PC-9 (cell line): ENCODE measurements at regions of chr16 and their contacts with region 1.

Region 1: DNA sequence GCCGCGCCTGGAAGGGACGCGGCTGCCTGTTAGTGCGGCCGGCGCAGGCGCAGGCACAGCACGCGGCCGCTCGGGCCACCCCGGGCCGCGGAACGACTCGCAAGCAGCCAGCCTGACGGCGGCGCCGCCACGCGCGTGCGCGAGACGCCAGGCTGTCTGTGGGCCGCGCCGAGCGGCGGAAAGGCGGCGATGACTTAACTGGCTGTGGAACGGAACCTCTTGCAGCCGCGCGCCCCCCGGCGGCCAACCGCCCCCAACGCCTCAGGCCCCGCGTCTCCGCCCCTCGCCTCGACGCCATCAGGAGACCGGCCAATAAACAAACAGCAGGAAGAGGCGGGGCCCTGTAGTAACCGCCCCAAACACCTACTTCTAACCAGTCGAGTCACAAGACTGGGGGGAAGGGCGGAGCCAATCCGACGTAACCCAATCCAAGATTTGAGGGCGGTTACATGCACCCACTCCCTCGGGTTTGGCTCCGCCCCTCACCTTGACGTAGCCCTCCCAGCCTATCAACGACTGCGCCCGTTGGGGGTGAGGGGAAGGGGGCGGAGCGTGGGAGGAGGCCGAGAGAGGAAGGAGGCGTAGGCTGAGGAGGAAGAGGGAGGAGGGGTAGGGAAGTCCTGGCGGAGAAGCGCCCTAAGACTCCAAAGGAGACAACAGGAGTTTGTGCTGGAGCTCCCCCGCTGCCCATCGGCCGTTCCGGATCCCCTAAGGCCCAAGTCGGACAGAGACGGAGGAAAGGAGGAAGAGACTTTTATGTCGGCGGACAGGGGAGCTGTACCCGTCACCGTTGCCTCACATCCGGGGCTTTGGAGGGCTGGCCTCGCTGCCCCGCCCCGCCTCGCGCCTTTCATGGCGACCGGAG is at the start of gene FBRS:
- DNase-seq: peak; percentile 100
- H3K4me3 ChIP-seq: peak within 1 kb of the TSS; percentile 68
- H3K27ac ChIP-seq: peak within 1 kb of the TSS; percentile 86
- H3K4me1 ChIP-seq: peaks cover 26% of the 10 kb centered on the region
- H3K27me3 ChIP-seq: no peaks in the 10 kb centered on the region
- CTCF ChIP-seq: peak; percentile 66
- total RNA-seq, gene FBRS: 87.5 and 128 TPM in 2 replicates

Region 2: DNA sequence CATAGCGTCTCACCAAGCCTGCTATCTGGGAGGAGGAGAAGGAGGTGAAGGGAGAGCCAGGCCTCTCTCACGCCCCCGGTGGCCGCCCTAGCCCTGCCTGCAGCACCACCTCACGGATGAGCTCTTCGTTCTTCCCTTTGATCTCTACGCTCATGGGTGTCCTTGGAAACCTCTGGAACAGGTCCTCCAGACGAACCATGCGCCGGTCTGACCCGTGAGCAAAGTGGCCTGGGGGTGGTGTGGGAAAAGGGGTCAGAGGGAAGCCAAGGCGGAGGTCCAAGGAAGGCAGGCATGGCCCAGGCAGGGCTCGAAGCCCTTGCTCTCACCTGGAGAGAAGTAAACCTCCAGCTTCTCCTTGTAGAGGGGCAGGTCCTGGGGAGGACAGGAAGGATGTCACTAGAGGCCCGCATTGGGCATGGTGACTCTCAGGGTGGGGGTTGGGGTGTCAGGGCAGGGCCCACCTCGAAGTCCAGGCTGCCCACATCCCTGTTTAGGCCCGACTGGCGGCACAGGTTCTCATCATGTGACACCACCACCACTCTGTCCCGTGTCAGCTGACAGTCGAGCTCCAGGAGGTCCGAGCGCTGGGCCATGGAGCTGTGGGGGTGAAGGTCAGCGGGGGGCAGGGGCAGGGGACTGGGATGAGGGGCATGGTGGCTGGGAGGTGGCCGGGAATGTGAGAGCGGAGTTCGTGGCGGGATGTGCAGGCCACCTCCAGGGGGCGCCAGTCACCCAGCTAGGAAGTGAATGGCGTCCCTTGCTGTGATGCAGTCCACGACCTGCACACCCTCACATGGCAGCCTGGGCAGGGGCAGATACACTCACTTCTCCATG is 545.7 kb before region 1 on chr16:
- CTCF ChIA-PET with region 1: no interaction called
- POLR2A ChIA-PET with region 1: no interaction called
- intact Hi-C with region 1: loop called (anchors 5 kb)
- DNase-seq: peak; percentile 49 to 71
- H3K4me3 ChIP-seq: no peak overlapping the region
- H3K27ac ChIP-seq: no peak overlapping the region
- H3K4me1 ChIP-seq: peaks cover 55% of the 10 kb centered on the region
- H3K27me3 ChIP-seq: no peaks in the 10 kb centered on the region
- CTCF ChIP-seq: peak; percentile 67

Region 3: DNA sequence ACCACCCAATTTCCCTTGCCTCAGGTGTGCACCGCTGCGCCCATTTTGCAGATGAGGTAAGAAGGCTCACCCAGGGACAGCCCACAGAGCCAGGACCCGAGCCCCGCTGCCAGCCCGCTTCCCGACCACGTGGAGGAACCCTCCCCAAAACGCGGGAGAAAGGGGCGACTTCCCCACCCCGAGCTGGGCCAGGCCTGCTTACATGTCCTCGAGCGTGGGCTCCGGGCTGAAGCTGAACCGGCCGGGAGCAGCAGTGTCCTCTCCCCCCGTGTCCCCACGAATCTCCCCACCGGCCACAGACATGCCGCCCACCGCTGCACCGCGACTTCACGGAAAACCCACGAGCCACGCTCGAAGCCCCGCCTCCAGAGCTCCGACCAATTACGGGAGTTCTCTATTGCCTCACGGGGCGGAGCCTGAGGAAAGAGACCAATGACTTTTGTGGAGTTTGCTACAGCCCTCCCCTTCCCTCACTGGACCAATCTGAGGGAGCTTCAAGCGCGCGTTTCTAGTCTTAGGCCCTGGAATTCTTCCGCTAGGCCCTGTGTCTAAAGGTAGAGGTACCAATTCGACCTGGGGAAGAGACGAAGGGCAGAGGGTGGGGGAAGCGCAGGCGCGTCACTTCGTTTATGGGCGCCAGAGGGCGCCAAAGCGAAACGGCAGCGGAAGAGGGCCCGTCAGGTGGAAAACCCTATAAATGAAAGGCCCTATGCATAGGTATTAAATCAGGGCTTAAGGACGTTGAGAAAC is 228.2 kb before region 1 on chr16 and contains the start of gene DCTPP1:
- CTCF ChIA-PET with region 1: interaction called, 7 read pairs
- POLR2A ChIA-PET with region 1: interaction called, 3 read pairs
- intact Hi-C with region 1: loop called (anchors 1 kb)
- DNase-seq: peak; percentile 98 to 99
- H3K4me3 ChIP-seq: peak within 1 kb of the TSS; percentile 67
- H3K27ac ChIP-seq: peak within 1 kb of the TSS; percentile 3; the same call in 1 of the 2 replicates
- H3K4me1 ChIP-seq: peaks cover 12% of the 10 kb centered on the region
- H3K27me3 ChIP-seq: no peaks in the 10 kb centered on the region
- CTCF ChIP-seq: peak; percentile 91
- total RNA-seq, gene DCTPP1: 80.4 and 109 TPM in 2 replicates

Region 4: DNA sequence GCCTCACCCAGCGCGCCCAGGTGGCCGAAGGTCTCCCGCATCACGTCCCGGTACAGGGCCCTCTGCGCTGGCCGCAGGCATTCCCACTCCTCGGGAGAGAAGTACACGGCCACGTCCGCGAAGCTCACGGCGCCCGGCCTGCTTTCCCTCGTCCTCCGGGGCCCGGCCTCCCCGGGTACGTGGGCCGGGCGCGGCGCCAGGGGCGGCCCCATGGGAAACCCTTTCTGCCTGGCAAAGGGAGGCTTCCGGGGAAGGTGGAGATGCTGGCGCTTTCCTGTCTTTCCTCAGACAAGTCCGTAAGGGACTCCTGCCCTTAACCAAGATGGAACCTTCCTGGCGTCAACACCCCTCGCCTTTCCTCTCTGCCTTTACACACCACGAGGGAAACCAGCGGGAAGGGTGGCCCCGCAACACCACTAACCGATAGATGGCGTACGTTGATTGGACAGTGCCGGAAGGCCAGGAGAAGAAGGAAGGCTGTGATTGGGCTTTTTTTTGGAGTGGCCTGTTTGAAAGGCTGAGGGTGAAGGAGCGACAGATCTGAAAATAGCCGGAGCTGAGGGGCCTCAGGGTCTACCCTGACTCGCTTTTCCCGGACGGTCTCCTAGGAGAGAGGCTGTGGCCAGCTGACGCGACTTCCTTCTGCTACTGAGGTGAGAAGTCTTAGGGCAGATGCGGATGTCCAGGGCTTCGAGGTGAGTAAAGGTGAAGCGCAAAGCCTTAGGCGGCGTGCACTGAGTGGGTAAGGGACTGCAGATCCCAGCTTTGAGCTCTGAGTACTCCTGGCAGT is 72.5 kb before region 1 on chr16 and contains the start of gene ZNF785:
- CTCF ChIA-PET with region 1: no interaction called
- POLR2A ChIA-PET with region 1: no interaction called
- intact Hi-C with region 1: loop called (anchors 2 kb)
- DNase-seq: peak; percentile 97 to 98
- H3K4me3 ChIP-seq: peak within 1 kb of the TSS; percentile 89
- H3K27ac ChIP-seq: peak within 1 kb of the TSS; percentile 57
- H3K4me1 ChIP-seq: peaks cover 12% of the 10 kb centered on the region; the same call in 1 of the 2 replicates
- H3K27me3 ChIP-seq: no peaks in the 10 kb centered on the region
- CTCF ChIP-seq: peak; percentile 46
- total RNA-seq, gene ZNF785: 30.9 and 39.8 TPM in 2 replicates

Region 5: GRCh38 chr16:30728899-30729672 is 71.0 kb after region 1 on chr16:
- CTCF ChIA-PET with region 1: no interaction called
- POLR2A ChIA-PET with region 1: interaction called, 11 read pairs
- intact Hi-C with region 1: no loop called
- DNase-seq: no peak
- H3K4me3 ChIP-seq: no peak overlapping the region
- H3K27ac ChIP-seq: no peak overlapping the region
- H3K4me1 ChIP-seq: no peaks in the 10 kb centered on the region
- H3K27me3 ChIP-seq: no peaks in the 10 kb centered on the region
- CTCF ChIP-seq: no peak

Region 6: DNA sequence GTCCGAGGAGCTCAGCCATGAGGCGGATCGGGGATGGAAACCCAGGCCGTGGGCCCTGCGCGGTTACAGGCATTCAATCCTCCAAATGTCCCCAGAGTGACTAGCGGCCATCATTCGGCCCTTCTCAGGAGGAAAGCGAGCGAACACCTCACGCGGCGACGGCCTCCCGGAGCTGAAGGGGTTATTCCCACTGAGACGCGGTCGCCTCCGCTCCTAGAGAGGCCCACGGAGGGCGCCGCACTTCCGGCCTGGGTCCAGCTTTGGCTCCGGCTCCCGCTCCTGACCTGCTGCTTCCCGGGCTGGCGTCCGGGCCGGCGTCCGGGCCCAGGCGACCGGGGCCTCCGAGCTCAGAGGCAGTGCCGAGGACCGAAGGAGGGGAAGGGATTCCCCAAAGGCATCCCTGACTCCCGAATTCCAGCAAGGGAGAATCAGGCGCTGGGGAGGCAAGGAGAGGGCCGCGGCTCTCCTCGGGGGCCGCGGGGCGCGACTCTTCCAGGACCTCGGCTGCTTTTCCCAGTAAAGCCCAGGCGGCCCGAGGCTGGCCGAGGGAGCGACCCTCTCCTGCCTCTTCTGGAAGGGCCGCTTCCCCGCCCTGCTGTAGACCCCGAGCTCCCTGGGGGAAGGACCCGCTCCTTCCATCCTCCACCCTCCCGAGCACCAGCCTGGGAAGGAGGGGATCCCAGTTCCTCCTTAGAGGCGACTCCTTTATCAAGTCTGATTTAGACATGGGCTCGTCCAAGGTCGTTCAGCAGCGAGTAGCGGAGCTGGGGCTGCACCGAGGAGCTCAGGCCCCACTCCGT is 147.5 kb after region 1 on chr16:
- CTCF ChIA-PET with region 1: interaction called, 3 read pairs
- POLR2A ChIA-PET with region 1: no interaction called
- intact Hi-C with region 1: loop called (anchors 1 kb)
- DNase-seq: peak; percentile 61 to 87
- H3K4me3 ChIP-seq: peak overlapping the region; percentile 78
- H3K27ac ChIP-seq: peak overlapping the region; percentile 60
- H3K4me1 ChIP-seq: peaks cover 12% of the 10 kb centered on the region
- H3K27me3 ChIP-seq: no peaks in the 10 kb centered on the region
- CTCF ChIP-seq: no peak; the same call in 1 of the 2 replicates

Region 7: DNA sequence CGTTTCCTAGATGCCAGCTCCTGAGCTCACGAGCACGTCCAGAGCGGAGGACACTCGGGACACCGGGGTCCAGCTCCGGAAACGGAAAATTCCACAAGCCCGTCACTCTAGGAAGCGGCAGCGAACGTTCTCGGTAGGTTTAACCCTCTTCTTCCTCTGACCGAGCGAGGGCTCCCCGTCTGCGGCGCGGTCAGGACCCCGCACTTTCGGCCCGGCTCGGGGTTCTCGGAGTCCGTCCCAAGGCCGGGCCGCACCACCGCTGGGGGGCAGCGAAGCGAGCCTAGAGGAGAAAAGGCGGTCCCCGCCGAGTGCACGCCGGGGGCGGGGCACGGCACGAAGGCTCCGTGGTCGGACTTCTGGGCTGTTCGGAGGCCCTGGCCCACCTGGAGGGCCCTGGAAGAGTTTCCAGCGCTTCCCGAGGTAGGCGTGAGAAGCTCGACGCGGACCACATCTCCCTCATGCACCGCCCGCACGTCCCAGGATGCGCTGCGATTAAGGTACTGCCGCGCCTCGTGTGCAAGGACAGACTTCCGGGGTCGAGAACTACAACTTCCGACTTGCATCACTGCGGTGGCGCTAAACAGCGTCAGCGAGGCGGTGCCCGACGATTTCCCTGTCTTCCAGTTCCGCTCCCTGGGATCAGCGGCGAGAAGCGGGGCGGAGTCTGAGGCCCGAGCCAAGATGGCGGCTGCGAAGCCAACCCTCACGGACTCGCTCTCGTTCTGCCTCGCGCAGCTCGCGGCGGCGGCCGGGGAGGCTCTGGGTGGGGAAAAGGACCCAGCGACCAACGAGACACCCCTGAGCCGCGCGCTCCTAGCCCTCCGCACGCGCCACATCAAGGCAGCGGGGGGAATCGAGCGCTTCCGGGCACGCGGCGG is 801.0 kb after region 1 on chr16 and contains the start of gene ARMC5:
- CTCF ChIA-PET with region 1: no interaction called
- POLR2A ChIA-PET with region 1: no interaction called
- intact Hi-C with region 1: loop called (anchors 10 kb)
- DNase-seq: peak; percentile 96 to 99
- H3K4me3 ChIP-seq: peak within 1 kb of the TSS; percentile 80
- H3K27ac ChIP-seq: peak within 1 kb of the TSS; percentile 95
- H3K4me1 ChIP-seq: peaks cover 41% of the 10 kb centered on the region
- H3K27me3 ChIP-seq: no peaks in the 10 kb centered on the region
- CTCF ChIP-seq: peak; percentile 66
- total RNA-seq, gene ARMC5: 18.6 and 21.4 TPM in 2 replicates